Testis (tissue), 5 donors: ENCODE measurements at regions of chr2 and their contacts with region 1.

Region 1: GRCh38 chr2:237512774-237513466 is 25.9 kb downstream of the MLPH start:
- DNase-seq: peak; percentile 94
- H3K4me3 ChIP-seq: no peak overlapping the region
- H3K27ac ChIP-seq: peak overlapping the region; percentile 66 to 70
- H3K4me1 ChIP-seq: peaks cover 48% of the 10 kb centered on the region
- H3K27me3 ChIP-seq: no peaks in the 10 kb centered on the region
- CTCF ChIP-seq: peak; percentile 89 to 93 (median 89)
- POLR2A ChIP-seq: no peak

Region 2: DNA sequence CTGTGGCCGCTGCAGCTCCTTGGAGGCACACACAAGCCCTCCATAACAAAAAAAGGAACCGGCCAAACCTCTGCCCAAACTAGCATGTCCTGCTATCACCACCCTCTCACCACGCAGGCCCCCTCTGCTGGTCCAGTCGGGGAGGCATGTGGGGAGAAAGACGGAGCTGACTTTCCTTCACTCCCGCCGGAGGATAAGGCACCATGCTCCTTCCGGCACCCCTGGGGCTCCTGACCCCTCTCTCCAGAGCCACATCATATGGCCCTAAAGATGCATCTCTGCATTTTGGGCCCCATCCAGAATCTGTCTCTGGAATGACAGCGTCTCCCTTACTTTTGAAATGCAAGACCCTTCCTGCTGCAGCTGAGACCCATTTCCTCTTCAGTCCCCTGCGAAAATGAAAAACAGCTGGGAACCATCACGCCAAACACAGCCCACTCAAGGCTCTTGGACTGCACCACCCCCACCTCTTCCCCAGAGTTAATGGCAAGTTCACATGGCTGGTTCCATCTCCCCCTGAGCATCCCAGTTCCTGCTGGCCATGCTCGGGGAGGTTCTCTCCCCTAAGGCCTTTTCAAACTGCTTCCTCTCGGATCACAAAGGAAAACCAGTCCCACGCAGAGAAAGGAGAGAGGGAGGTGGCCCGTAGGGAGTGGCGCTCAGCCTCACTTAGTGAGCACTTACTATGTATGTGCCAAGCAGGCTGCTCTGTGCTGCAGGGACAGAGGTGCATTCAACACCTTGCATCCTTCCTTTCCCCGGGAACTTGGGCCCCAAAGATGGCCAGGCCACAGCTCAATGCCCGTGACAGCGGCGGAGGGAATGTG is 61.1 kb before region 1 on chr2:
- intact Hi-C with region 1: no loop called
- DNase-seq: no peak
- H3K4me3 ChIP-seq: no peak overlapping the region
- H3K27ac ChIP-seq: no peak overlapping the region
- H3K4me1 ChIP-seq: peaks cover 12% of the 10 kb centered on the region
- H3K27me3 ChIP-seq: no peaks in the 10 kb centered on the region
- CTCF ChIP-seq: no peak
- POLR2A ChIP-seq: no peak

Region 3: GRCh38 chr2:237572021-237572741 is 59.3 kb after region 1 on chr2:
- intact Hi-C with region 1: loop called (anchors 5 kb)
- DNase-seq: peak; percentile 93
- H3K4me3 ChIP-seq: no peak overlapping the region
- H3K27ac ChIP-seq: no peak overlapping the region
- H3K4me1 ChIP-seq: peaks cover 7% of the 10 kb centered on the region
- H3K27me3 ChIP-seq: no peaks in the 10 kb centered on the region
- CTCF ChIP-seq: peak; percentile 97 to 98 (median 97)
- POLR2A ChIP-seq: no peak

Region 4: GRCh38 chr2:237744613-237745249 is 231.8 kb after region 1 on chr2:
- intact Hi-C with region 1: loop called (anchors 10 kb)
- DNase-seq: peak; percentile 86
- H3K4me3 ChIP-seq: no peak overlapping the region
- H3K27ac ChIP-seq: no peak overlapping the region
- H3K4me1 ChIP-seq: no peaks in the 10 kb centered on the region
- H3K27me3 ChIP-seq: no peaks in the 10 kb centered on the region
- CTCF ChIP-seq: peak; percentile 94 to 95 (median 94)
- POLR2A ChIP-seq: no peak

Region 5: DNA sequence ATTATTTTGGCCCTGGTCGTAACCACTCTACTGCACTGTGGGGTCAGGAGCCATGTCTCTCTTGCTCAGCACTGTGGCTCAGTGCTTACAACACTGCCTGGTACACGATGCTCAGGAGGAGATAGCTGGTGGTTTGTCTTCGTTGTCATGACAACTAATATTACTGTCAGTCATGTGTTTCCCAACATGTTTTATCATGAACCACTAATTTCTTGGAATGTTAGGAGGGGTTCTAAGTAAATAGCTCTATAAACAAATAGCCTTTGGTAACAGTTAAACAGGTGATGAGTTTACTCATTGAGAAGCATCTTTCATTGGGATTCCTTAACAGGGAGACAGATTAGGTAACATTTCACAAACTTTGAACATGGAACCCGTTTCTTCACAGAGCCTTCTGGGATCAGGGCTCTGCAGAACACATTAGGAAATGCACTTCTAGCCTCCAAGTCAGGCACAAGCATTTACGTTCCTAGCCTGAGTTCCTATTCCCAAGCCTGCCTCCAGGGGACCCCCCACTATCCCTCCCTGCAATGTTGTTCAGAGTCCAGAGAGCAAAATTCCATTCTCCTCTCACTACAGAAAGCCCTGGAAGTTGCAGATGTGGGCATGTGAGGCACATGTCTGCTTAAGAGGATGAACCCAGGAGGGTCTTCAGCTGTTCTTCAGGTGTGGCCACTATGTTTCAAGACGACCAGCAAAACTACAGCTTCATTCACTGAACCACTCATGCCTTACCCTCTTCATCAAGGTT is 279.2 kb after region 1 on chr2:
- intact Hi-C with region 1: no loop called
- DNase-seq: no peak
- H3K4me3 ChIP-seq: no peak overlapping the region
- H3K27ac ChIP-seq: no peak overlapping the region
- H3K4me1 ChIP-seq: no peaks in the 10 kb centered on the region
- H3K27me3 ChIP-seq: no peaks in the 10 kb centered on the region
- CTCF ChIP-seq: no peak
- POLR2A ChIP-seq: no peak